ENCODE measurements at regions of chr7 and their contacts with region 1.

Region 1: GRCh38 chr7:135281363-135281949 is 47.8 kb downstream of the STRA8 start:
- DNase-seq: peak; percentile 89
- ATAC-seq: peak; percentile 99
- H3K4me3 Mint-ChIP-seq: no peak overlapping the region
- H3K27ac Mint-ChIP-seq: no peak overlapping the region
- H3K4me1 Mint-ChIP-seq: peaks cover 20% of the 10 kb centered on the region
- H3K27me3 Mint-ChIP-seq: peaks cover 19% of the 10 kb centered on the region

Region 2: GRCh38 chr7:135335628-135336139 is 54.2 kb after region 1 on chr7:
- CTCF ChIA-PET with region 1: interaction called, 22 read pairs
- DNase-seq: peak; percentile 49
- ATAC-seq: peak; percentile 42
- H3K4me3 Mint-ChIP-seq: no peak overlapping the region
- H3K27ac Mint-ChIP-seq: no peak overlapping the region
- H3K4me1 Mint-ChIP-seq: no peaks in the 10 kb centered on the region
- H3K27me3 Mint-ChIP-seq: no peaks in the 10 kb centered on the region